ENCODE measurements at regions of chr1 and their contacts with region 1.

Region 1: GRCh38 chr1:24586970-24587820 is 31.3 kb downstream of the NCMAP start:
- DNase-seq: peak; percentile 49
- H3K4me3 Mint-ChIP-seq: no peak overlapping the region
- H3K27ac Mint-ChIP-seq: peak overlapping the region; percentile 31
- H3K4me1 Mint-ChIP-seq: peaks cover 5% of the 10 kb centered on the region
- H3K27me3 Mint-ChIP-seq: peaks cover 2% of the 10 kb centered on the region

Region 2: GRCh38 chr1:24329797-24330543 is 257.2 kb before region 1 on chr1:
- CTCF ChIA-PET with region 1: no interaction called
- POLR2A ChIA-PET with region 1: no interaction called
- intact Hi-C with region 1: no loop called
- DNase-seq: no peak
- H3K4me3 Mint-ChIP-seq: no peak overlapping the region
- H3K27ac Mint-ChIP-seq: no peak overlapping the region
- H3K4me1 Mint-ChIP-seq: no peaks in the 10 kb centered on the region
- H3K27me3 Mint-ChIP-seq: peaks cover 17% of the 10 kb centered on the region

Region 3: GRCh38 chr1:24481101-24481500 is 106.1 kb before region 1 on chr1:
- CTCF ChIA-PET with region 1: interaction called, 14 read pairs
- POLR2A ChIA-PET with region 1: no interaction called
- intact Hi-C with region 1: no loop called
- DNase-seq: peak; percentile 83
- H3K4me3 Mint-ChIP-seq: peak overlapping the region; percentile 58
- H3K27ac Mint-ChIP-seq: peak overlapping the region; percentile 97
- H3K4me1 Mint-ChIP-seq: peaks cover 60% of the 10 kb centered on the region
- H3K27me3 Mint-ChIP-seq: no peaks in the 10 kb centered on the region

Region 4: GRCh38 chr1:24502709-24503058 is 84.5 kb before region 1 on chr1 and contains the start of gene RCAN3:
- CTCF ChIA-PET with region 1: interaction called, 15 read pairs
- POLR2A ChIA-PET with region 1: interaction called, 4 read pairs
- intact Hi-C with region 1: loop called (anchors 10 kb)
- DNase-seq: peak; percentile 92
- H3K4me3 Mint-ChIP-seq: peak within 1 kb of the TSS; percentile 98
- H3K27ac Mint-ChIP-seq: peak within 1 kb of the TSS; percentile 99
- H3K4me1 Mint-ChIP-seq: peaks cover 61% of the 10 kb centered on the region
- H3K27me3 Mint-ChIP-seq: no peaks in the 10 kb centered on the region
- total RNA-seq, gene RCAN3: 71.3 to 78.8 TPM

Region 5: GRCh38 chr1:24541711-24542346 is 45.4 kb before region 1 on chr1:
- CTCF ChIA-PET with region 1: interaction called, 48 read pairs
- POLR2A ChIA-PET with region 1: no interaction called
- intact Hi-C with region 1: loop called (anchors 1 kb)
- DNase-seq: peak; percentile 58
- H3K4me3 Mint-ChIP-seq: no peak overlapping the region
- H3K27ac Mint-ChIP-seq: peak overlapping the region; percentile 93
- H3K4me1 Mint-ChIP-seq: peaks cover 65% of the 10 kb centered on the region
- H3K27me3 Mint-ChIP-seq: no peaks in the 10 kb centered on the region

Region 6: DNA sequence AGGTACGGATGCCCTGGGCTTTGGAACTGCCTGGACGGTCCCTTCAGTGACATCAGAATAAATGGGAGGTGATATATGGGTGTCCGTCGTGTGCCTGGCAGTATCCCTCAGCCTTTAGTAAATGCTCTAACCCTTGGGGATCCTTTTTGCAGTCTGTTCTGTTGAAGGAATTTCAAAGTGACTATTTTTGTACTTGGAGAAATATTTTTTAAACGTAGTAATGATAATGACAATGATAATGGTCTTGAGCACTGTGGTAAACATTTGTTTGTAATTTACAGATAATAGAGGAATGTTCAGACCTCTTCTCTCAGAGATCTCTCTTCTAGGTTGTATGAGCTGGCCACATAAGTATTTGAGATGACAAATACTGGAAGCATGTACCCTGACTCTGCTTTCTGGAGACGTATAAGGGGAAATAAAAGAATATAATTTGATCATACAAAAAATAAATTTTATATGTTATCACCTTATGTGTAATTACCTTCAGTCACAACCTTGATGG is 13.9 kb after region 1 on chr1:
- CTCF ChIA-PET with region 1: interaction called, 18 read pairs
- POLR2A ChIA-PET with region 1: no interaction called
- intact Hi-C with region 1: no loop called
- DNase-seq: no peak
- H3K4me3 Mint-ChIP-seq: no peak overlapping the region
- H3K27ac Mint-ChIP-seq: no peak overlapping the region
- H3K4me1 Mint-ChIP-seq: no peaks in the 10 kb centered on the region
- H3K27me3 Mint-ChIP-seq: peaks cover 5% of the 10 kb centered on the region

Measured in activated CD4-positive, alpha-beta memory T cell treated with anti-CD3 and anti-CD28 coated beads for 36 hours (primary cell).